ENCODE measurements at regions of chr22 and their contacts with region 1.

Region 1: DNA sequence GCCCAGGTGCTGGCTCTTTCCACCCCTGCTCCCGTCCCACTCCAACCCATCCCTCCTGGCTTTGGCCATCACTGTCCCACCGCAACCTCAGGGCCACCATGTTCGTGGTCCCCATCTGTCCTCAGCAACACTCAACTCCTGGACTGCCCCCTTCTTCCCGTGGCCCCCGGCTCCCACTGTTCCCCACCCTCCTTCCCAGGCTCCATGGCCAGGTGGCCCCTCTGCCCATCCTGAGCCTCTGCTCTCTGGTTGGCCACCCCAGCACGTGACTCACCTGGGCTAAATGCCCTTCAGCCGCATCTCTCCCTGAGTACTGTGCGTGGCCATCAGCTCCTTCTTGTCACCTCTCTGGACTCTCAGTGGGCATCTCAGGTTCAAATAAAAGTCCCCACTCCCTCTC is 41.6 kb upstream of the PHF21B start:
- DNase-seq: no peak
- H3K4me3 ChIP-seq: no peak overlapping the region
- CTCF ChIP-seq: no peak

Region 2: GRCh38 chr22:44982445-44982844 is 69.0 kb before region 1 on chr22:
- in situ Hi-C with region 1: loop called (anchors 5 kb)
- DNase-seq: no peak
- H3K4me3 ChIP-seq: no peak overlapping the region
- CTCF ChIP-seq: no peak

Region 3: GRCh38 chr22:45091254-45091854 is 39.9 kb after region 1 on chr22:
- in situ Hi-C with region 1: no loop called
- DNase-seq: no peak
- H3K4me3 ChIP-seq: no peak overlapping the region
- CTCF ChIP-seq: no peak